Naive thymus-derived CD4-positive, alpha-beta T cell (primary cell): ENCODE measurements at regions of chr11 and their contacts with region 1.

Region 1: GRCh38 chr11:65859200-65859811 is 927 bp upstream of the MUS81 start:
- DNase-seq: peak; percentile 84 to 97 (median 90)
- ATAC-seq: peak; percentile 71
- H3K4me3 ChIP-seq: peak overlapping the region; percentile 65
- H3K4me3 Mint-ChIP-seq: peak overlapping the region; percentile 92 to 100 (median 97)
- H3K27ac ChIP-seq: peak overlapping the region; percentile 88
- H3K27ac Mint-ChIP-seq: peak overlapping the region; percentile 88 to 99 (median 97)
- H3K4me1 ChIP-seq: peaks cover 39 to 41% of the 10 kb centered on the region in 2 donors
- H3K4me1 Mint-ChIP-seq: peaks cover 35 to 63% (median 50%) of the 10 kb centered on the region in 7 donors
- H3K27me3 ChIP-seq: no peaks in the 10 kb centered on the region
- H3K27me3 Mint-ChIP-seq: no peaks in the 10 kb centered on the region

Region 2: DNA sequence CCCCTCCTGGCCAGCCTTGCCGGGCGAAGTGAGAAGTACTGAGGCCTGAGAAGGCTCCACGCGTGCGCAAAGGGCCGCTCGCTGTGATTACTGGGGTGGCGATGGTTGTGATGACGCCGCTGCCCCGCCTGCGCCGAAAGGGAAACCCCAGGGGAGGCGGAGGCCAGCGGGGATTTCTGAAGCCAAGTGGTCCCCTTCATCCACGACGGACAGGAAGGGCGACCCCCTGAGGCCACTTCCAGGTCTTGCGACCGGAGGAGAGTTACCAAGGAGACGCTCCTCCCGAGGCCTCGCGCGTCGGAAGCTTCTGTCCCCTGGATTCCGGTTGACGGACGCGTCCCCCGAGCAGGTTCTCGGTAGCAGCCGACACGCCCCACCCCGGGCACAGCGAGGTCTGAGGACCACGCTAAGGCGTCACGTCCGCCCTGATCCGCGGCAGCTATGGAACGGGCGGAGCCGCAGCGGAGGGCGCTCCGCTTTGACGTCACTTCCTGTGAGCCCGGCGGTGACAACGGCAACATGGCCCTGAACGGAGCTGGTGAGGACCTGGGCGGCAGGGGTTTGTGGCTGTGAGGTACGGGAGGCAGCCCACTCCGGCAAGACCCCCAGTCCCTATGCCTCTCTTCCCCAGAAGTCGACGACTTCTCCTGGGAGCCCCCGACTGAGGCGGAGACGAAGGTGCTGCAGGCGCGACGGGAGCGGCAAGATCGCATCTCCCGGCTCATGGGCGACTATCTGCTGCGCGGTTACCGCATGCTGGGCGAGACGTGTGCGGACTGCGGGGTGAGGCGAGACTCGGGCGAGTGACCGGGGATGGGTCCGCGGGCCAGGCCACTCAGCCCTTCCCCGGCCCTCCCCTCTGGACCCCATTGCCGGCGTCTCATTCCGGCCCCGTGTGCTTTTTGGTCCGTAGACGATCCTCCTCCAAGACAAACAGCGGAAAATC is 289.1 kb before region 1 on chr11 and contains the start of gene ZNRD2:
- CTCF ChIA-PET with region 1: no interaction called
- POLR2A ChIA-PET with region 1: interaction called, 6 read pairs
- intact Hi-C with region 1: loop called (anchors 2 kb)
- DNase-seq: peak; percentile 94 to 99 (median 98)
- ATAC-seq: peak; percentile 82
- H3K4me3 ChIP-seq: peak within 1 kb of the TSS; percentile 96
- H3K4me3 Mint-ChIP-seq: peak within 1 kb of the TSS; percentile 91 to 100 (median 97)
- H3K27ac ChIP-seq: peak within 1 kb of the TSS; percentile 96
- H3K27ac Mint-ChIP-seq: peak within 1 kb of the TSS; percentile 89 to 100 (median 99)
- H3K4me1 ChIP-seq: peaks cover 63 to 64% of the 10 kb centered on the region in 2 donors
- H3K4me1 Mint-ChIP-seq: peaks cover 49 to 77% (median 69%) of the 10 kb centered on the region in 7 donors
- H3K27me3 ChIP-seq: no peaks in the 10 kb centered on the region
- H3K27me3 Mint-ChIP-seq: no peaks in the 10 kb centered on the region
- total RNA-seq, gene ZNRD2: 29.1 to 40.9 (median 32.9) TPM

Region 3: GRCh38 chr11:65720237-65720934 is 138.9 kb before region 1 on chr11 and contains the start of gene RNASEH2C:
- CTCF ChIA-PET with region 1: no interaction called
- POLR2A ChIA-PET with region 1: interaction called, 5 read pairs
- intact Hi-C with region 1: loop called (anchors 1 kb)
- DNase-seq: peak; percentile 64 to 83 (median 72)
- ATAC-seq: peak; percentile 95
- H3K4me3 ChIP-seq: peak within 1 kb of the TSS; percentile 70
- H3K4me3 Mint-ChIP-seq: peak within 1 kb of the TSS; percentile 83 to 98 (median 92)
- H3K27ac ChIP-seq: peak within 1 kb of the TSS; percentile 79
- H3K27ac Mint-ChIP-seq: peak within 1 kb of the TSS; percentile 57 to 91 (median 88)
- H3K4me1 ChIP-seq: peaks cover 14 to 16% of the 10 kb centered on the region in 2 donors
- H3K4me1 Mint-ChIP-seq: peaks cover 14 to 41% (median 31%) of the 10 kb centered on the region in 7 donors
- H3K27me3 ChIP-seq: no peaks in the 10 kb centered on the region
- H3K27me3 Mint-ChIP-seq: peaks cover 0 to 2% (median 0%) of the 10 kb centered on the region in 5 donors
- total RNA-seq, gene RNASEH2C: 41.8 to 94.0 (median 82.0) TPM

Region 4: GRCh38 chr11:65743928-65744698 is 115.2 kb before region 1 on chr11:
- CTCF ChIA-PET with region 1: no interaction called
- POLR2A ChIA-PET with region 1: no interaction called
- intact Hi-C with region 1: no loop called
- DNase-seq: no peak
- ATAC-seq: peak; percentile 66
- H3K4me3 ChIP-seq: no peak overlapping the region
- H3K4me3 Mint-ChIP-seq: no peak overlapping the region
- H3K27ac ChIP-seq: no peak overlapping the region
- H3K27ac Mint-ChIP-seq: no peak overlapping the region
- H3K4me1 ChIP-seq: no peaks in the 10 kb centered on the region
- H3K4me1 Mint-ChIP-seq: no peaks in the 10 kb centered on the region
- H3K27me3 ChIP-seq: peaks cover 0 to 4% of the 10 kb centered on the region in 2 donors
- H3K27me3 Mint-ChIP-seq: peaks cover 9 to 28% (median 12%) of the 10 kb centered on the region in 5 donors

Region 5: DNA sequence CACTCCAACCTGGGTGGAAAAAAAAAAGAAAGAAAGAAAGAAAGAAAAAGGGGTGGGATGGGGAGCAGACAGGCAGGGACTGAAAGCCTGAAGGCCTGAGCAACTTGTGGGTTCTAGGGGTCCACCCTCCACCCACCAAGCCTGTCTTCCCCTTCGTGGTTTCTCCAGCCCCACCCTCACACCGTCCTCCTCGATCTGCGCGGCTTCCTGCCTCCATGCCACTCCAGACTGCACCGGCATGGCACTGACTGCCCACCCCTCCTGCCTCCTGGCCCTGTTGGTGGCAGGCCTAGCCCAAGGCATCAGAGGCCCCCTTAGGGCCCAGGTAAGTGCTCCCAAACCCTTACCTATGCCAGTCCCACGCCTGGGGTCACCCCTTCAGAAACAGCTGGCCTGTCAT is 20.3 kb after region 1 on chr11 and contains the start of gene CTSW:
- CTCF ChIA-PET with region 1: interaction called, 159 read pairs
- POLR2A ChIA-PET with region 1: interaction called, 316 read pairs
- intact Hi-C with region 1: loop called (anchors 1 kb)
- DNase-seq: peak in 1 of 9 donors; percentile 47
- ATAC-seq: peak; percentile 80
- H3K4me3 ChIP-seq: peak within 1 kb of the TSS; percentile 71
- H3K4me3 Mint-ChIP-seq: peak within 1 kb of the TSS in 8 of 10 donors; percentile 52 to 80 (median 68)
- H3K27ac ChIP-seq: peak within 1 kb of the TSS; percentile 69
- H3K27ac Mint-ChIP-seq: peak within 1 kb of the TSS in 8 of 9 donors; percentile 80 to 92 (median 84)
- H3K4me1 ChIP-seq: peaks cover 27 to 29% of the 10 kb centered on the region in 2 donors
- H3K4me1 Mint-ChIP-seq: peaks cover 9 to 45% (median 24%) of the 10 kb centered on the region in 7 donors
- H3K27me3 ChIP-seq: no peaks in the 10 kb centered on the region
- H3K27me3 Mint-ChIP-seq: no peaks in the 10 kb centered on the region
- total RNA-seq, gene CTSW: 24.9 to 148 (median 29.3) TPM

Region 6: GRCh38 chr11:65961232-65961901 is 102.1 kb after region 1 on chr11 and contains the start of gene SART1:
- CTCF ChIA-PET with region 1: interaction called, 3 read pairs
- POLR2A ChIA-PET with region 1: interaction called, 57 read pairs
- intact Hi-C with region 1: loop called (anchors 1 kb)
- DNase-seq: peak; percentile 81 to 97 (median 94)
- ATAC-seq: peak; percentile 96
- H3K4me3 ChIP-seq: peak within 1 kb of the TSS; percentile 83
- H3K4me3 Mint-ChIP-seq: peak within 1 kb of the TSS; percentile 93 to 99 (median 98)
- H3K27ac ChIP-seq: peak within 1 kb of the TSS; percentile 96
- H3K27ac Mint-ChIP-seq: peak within 1 kb of the TSS; percentile 96 to 99 (median 98)
- H3K4me1 ChIP-seq: peaks cover 27 to 38% of the 10 kb centered on the region in 2 donors
- H3K4me1 Mint-ChIP-seq: peaks cover 23 to 64% (median 54%) of the 10 kb centered on the region in 7 donors
- H3K27me3 ChIP-seq: no peaks in the 10 kb centered on the region
- H3K27me3 Mint-ChIP-seq: no peaks in the 10 kb centered on the region
- total RNA-seq, gene SART1: 65.9 to 102 (median 90.8) TPM

Region 7: GRCh38 chr11:66268283-66268951 is 409.1 kb after region 1 on chr11 and contains the start of gene RAB1B:
- CTCF ChIA-PET with region 1: no interaction called
- POLR2A ChIA-PET with region 1: no interaction called
- intact Hi-C with region 1: loop called in 1 of 2 experiments (anchors 1 kb)
- DNase-seq: peak; percentile 99 to 100 (median 99)
- ATAC-seq: peak; percentile 89
- H3K4me3 ChIP-seq: peak within 1 kb of the TSS; percentile 91
- H3K4me3 Mint-ChIP-seq: peak within 1 kb of the TSS; percentile 88 to 100 (median 95)
- H3K27ac ChIP-seq: peak within 1 kb of the TSS; percentile 90
- H3K27ac Mint-ChIP-seq: peak within 1 kb of the TSS; percentile 95 to 99 (median 97)
- H3K4me1 ChIP-seq: peaks cover 16 to 38% of the 10 kb centered on the region in 2 donors
- H3K4me1 Mint-ChIP-seq: peaks cover 26 to 48% (median 34%) of the 10 kb centered on the region in 7 donors
- H3K27me3 ChIP-seq: no peaks in the 10 kb centered on the region
- H3K27me3 Mint-ChIP-seq: peaks cover 0 to 3% (median 0%) of the 10 kb centered on the region in 5 donors
- total RNA-seq, gene RAB1B: 60.6 to 151 (median 70.7) TPM